ENCODE measurements at regions of chr12 and their contacts with region 1.

Region 1: DNA sequence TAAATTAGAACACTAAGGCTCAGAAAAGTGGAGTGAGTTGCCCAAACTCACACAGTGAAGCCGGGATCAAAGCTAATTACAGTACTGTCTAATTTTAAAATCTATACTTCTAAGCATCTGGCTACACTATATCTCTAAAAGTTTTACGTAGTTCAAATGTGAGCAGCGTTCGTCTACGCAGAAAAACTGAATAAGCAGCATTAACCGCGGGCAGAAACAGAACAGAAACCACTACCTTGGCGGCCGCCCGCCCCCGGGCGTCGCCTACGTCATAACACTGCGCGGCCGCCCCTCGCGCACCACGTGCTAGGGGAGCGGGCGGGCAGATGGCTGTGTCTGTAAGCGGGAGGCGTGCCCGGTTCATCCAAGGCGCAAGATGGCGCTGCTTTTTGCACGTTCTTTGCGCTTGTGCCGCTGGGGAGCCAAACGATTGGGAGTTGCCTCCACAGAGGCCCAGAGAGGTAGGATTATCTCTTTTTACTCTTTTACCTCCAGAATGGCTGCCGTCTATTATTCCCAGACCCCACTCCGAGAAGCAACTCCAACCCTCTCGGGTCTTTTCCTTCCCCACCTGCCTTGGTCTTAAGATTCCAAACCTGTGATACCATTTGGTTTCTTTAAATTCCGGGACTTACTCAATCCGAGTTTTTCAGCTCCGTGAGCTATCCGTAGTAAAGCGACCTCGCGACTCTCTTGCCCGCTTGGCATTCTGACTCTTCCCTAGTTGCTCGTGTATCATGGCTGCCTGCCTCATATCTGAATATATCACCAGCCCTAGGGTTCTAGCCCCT is at the start of gene SPRYD4:
- DNase-seq: peak; percentile 94
- H3K4me3 ChIP-seq: peak within 1 kb of the TSS; percentile 55 to 96 (median 65)
- H3K27ac ChIP-seq: peak within 1 kb of the TSS; percentile 86 to 92 (median 88)
- H3K4me1 ChIP-seq: peaks cover 7 to 17% (median 12%) of the 10 kb centered on the region in 4 donors
- H3K27me3 ChIP-seq: no peaks in the 10 kb centered on the region
- CTCF ChIP-seq: peak in 1 of 5 experiments; percentile 30
- EP300 ChIP-seq: no peak
- POLR2A ChIP-seq: peak; percentile 86
- total RNA-seq, gene SPRYD4: 3.0 to 11.5 (median 3.9) TPM

Region 2: GRCh38 chr12:56189176-56189917 is 279.1 kb before region 1 on chr12 and contains the start of gene SMARCC2:
- in situ Hi-C with region 1: loop called in 2 of 4 experiments (anchors 5 to 10 kb)
- intact Hi-C with region 1: no loop called
- DNase-seq: peak; percentile 94
- H3K4me3 ChIP-seq: peak within 1 kb of the TSS; percentile 87 to 99 (median 98)
- H3K27ac ChIP-seq: peak within 1 kb of the TSS; percentile 95 to 100 (median 99)
- H3K4me1 ChIP-seq: peaks cover 12 to 28% (median 22%) of the 10 kb centered on the region in 4 donors
- H3K27me3 ChIP-seq: no peaks in the 10 kb centered on the region
- CTCF ChIP-seq: peak; percentile 65 to 82 (median 74)
- EP300 ChIP-seq: no peak
- POLR2A ChIP-seq: peak; percentile 56
- total RNA-seq, gene SMARCC2: 63.8 to 231 (median 135) TPM

Region 3: DNA sequence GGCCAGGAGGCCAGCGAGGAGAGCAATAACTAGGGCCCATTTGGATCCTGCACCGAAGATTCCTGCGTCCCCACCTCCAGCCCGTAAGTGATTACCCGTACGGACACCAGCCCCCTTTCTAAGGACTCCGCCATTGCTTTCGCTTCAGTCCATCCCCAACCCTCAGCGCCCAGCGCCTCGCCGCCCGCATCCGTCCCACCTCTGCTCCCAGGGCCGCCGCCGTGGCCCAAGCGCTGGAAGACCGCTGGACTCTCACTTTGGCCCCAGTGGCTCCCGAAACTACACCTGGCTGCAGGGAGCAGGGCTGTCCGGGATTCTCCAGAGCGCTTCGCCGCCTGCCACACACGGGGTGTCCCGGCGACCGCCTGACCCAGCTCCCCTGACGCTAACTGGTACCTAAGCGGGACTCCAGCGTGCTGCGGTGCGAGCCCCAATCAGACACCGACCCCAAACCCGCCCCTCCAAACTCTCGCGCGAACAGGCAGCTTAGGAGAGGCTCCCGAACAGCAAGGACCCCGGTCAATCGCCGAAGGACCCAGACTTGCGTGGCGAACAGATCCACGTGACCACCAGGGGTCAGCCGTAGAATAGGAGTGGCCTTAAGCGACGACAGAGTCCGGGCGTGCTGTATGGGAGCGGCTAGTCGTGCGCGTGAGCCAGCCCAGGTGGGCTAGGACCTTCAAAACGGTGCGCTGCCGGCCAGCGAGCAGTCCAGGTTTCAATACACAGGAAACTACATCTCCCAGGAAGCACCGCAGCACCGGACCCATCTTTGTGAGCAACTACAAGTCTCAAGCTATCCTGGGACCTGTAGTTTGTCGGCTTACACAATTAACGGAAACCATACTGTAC is 152.6 kb before region 1 on chr12 and contains the start of gene CNPY2:
- in situ Hi-C with region 1: loop called in 1 of 4 experiments (anchors 10 kb)
- intact Hi-C with region 1: no loop called
- DNase-seq: peak; percentile 96
- H3K4me3 ChIP-seq: peak within 1 kb of the TSS; percentile 76 to 92 (median 79)
- H3K27ac ChIP-seq: peak within 1 kb of the TSS; percentile 91 to 97 (median 92)
- H3K4me1 ChIP-seq: peaks cover 13 to 17% (median 16%) of the 10 kb centered on the region in 4 donors
- H3K27me3 ChIP-seq: no peaks in the 10 kb centered on the region
- CTCF ChIP-seq: peak in 3 of 5 experiments; percentile 17 to 34 (median 33)
- EP300 ChIP-seq: peak; percentile 27
- POLR2A ChIP-seq: peak; percentile 88
- total RNA-seq, gene CNPY2: 34.0 to 87.2 (median 51.8) TPM

Region 4: DNA sequence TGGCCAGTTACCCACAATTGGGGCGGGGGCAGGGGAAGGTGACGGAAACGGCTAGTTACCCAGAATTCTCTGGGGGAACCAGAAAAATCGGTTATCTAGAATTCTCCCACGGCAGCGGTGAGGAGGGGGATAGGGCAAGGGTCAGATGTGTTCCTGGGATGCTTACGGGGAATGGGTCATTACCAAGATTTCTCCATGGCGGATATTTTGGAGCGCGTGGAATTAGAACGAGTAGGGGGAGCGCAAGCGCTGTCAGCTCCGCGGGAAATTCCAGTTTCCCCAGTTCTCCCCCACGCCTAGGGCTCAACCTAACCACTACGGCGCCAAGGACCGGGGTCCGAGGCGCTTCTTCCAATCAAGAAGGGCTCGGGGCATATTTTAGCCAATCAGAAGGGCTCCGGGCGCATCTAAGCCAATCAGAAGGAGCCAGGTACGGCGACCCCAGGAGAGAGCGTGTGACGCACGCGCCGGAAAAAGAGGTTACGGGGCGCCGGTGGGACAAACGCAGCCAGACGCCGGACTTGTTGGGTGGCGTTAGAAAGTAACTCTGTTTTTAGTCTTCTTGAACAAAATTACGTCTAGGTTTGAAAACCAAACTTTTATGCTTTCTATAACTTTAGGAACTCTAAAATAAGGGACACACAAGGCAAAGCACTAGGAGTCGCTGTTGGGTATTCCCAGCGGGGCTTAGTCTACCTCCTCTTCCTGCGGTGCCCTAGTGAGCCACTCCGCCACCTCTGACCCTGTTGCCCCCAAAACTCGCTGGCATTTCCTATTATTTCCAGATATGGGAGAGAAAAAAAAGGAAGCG is 134.5 kb before region 1 on chr12 and contains the start of gene PAN2:
- in situ Hi-C with region 1: loop called in 1 of 4 experiments (anchors 25 kb)
- intact Hi-C with region 1: no loop called
- DNase-seq: peak; percentile 96
- H3K4me3 ChIP-seq: peak within 1 kb of the TSS; percentile 45 to 73 (median 52)
- H3K27ac ChIP-seq: peak within 1 kb of the TSS; percentile 88 to 96 (median 94)
- H3K4me1 ChIP-seq: peaks cover 0 to 11% (median 3%) of the 10 kb centered on the region in 4 donors
- H3K27me3 ChIP-seq: no peaks in the 10 kb centered on the region
- CTCF ChIP-seq: peak; percentile 53 to 75 (median 65)
- EP300 ChIP-seq: no peak
- POLR2A ChIP-seq: peak; percentile 64
- total RNA-seq, gene PAN2: 45.2 to 206 (median 58.0) TPM

Region 5: GRCh38 chr12:56829908-56830307 is 361.5 kb after region 1 on chr12:
- in situ Hi-C with region 1: no loop called
- intact Hi-C with region 1: no loop called
- DNase-seq: no peak
- H3K4me3 ChIP-seq: no peak overlapping the region
- H3K27ac ChIP-seq: no peak overlapping the region
- H3K4me1 ChIP-seq: no peaks in the 10 kb centered on the region
- H3K27me3 ChIP-seq: peaks cover 4% of the 10 kb centered on the region
- CTCF ChIP-seq: no peak
- EP300 ChIP-seq: no peak
- POLR2A ChIP-seq: no peak